CD14-positive monocyte (primary cell): ENCODE measurements at regions of chr10 and their contacts with region 1.

Region 1: GRCh38 chr10:62816331-62817120 is at the start of gene EGR2:
- DNase-seq: peak; percentile 91 to 94 (median 93)
- H3K4me3 ChIP-seq: peak within 1 kb of the TSS; percentile 58 to 82 (median 70)
- H3K4me3 Mint-ChIP-seq: peak within 1 kb of the TSS; percentile 98 to 99
- H3K27ac ChIP-seq: peak within 1 kb of the TSS; percentile 65 to 86
- H3K27ac Mint-ChIP-seq: peak within 1 kb of the TSS; percentile 88 to 96 (median 95)
- H3K4me1 ChIP-seq: peaks cover 31 to 41% of the 10 kb centered on the region in 2 donors
- H3K4me1 Mint-ChIP-seq: peaks cover 36% of the 10 kb centered on the region
- H3K27me3 ChIP-seq: peaks cover 44 to 67% of the 10 kb centered on the region in 2 donors
- H3K27me3 Mint-ChIP-seq: peaks cover 64 to 82% (median 67%) of the 10 kb centered on the region in 3 donors
- CTCF ChIP-seq: no peak
- polyA plus RNA-seq, gene EGR2: 9.9 to 54.9 (median 10.3) TPM

Region 2: GRCh38 chr10:62437696-62438095 is 378.8 kb before region 1 on chr10:
- intact Hi-C with region 1: loop called in 1 of 2 experiments (anchors 5 kb)
- DNase-seq: peak; percentile 40 to 68 (median 55)
- H3K4me3 ChIP-seq: no peak overlapping the region
- H3K4me3 Mint-ChIP-seq: no peak overlapping the region
- H3K27ac ChIP-seq: no peak overlapping the region
- H3K27ac Mint-ChIP-seq: no peak overlapping the region
- H3K4me1 ChIP-seq: peaks cover 0 to 10% of the 10 kb centered on the region in 2 donors
- H3K4me1 Mint-ChIP-seq: peaks cover 11% of the 10 kb centered on the region
- H3K27me3 ChIP-seq: peaks cover 0 to 8% of the 10 kb centered on the region in 2 donors
- H3K27me3 Mint-ChIP-seq: peaks cover 3 to 4% (median 3%) of the 10 kb centered on the region in 3 donors
- CTCF ChIP-seq: peak; percentile 85

Region 3: DNA sequence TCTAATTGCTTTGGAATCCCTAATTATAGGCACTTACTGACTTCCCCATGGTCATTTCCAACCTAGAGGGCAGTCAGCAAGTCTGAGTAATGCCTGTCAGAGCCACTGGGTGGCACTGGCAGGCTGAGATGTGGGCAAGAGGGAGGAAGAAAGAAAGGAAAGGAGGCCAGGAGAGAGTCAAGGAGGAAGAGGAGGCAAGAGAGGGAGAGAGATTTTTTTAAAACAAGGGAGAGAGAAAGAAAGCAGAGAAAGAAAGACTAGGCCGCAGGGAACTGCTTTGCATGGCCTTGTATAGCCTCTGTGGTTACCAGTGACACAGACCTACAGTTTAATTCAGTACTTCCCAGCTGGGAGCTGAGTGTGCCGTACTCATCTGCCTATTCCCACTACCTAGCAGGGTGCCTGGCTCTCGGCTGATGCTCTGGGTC is 222.4 kb before region 1 on chr10:
- intact Hi-C with region 1: loop called in 1 of 2 experiments (anchors 5 kb)
- DNase-seq: peak; percentile 59 to 72 (median 68)
- H3K4me3 ChIP-seq: no peak overlapping the region
- H3K4me3 Mint-ChIP-seq: no peak overlapping the region
- H3K27ac ChIP-seq: no peak overlapping the region
- H3K27ac Mint-ChIP-seq: peak overlapping the region in 5 of 7 donors; percentile 21 to 87 (median 69)
- H3K4me1 ChIP-seq: peaks cover 7 to 11% of the 10 kb centered on the region in 2 donors
- H3K4me1 Mint-ChIP-seq: peaks cover 14% of the 10 kb centered on the region
- H3K27me3 ChIP-seq: no peaks in the 10 kb centered on the region
- H3K27me3 Mint-ChIP-seq: peaks cover 0 to 2% (median 0%) of the 10 kb centered on the region in 3 donors
- CTCF ChIP-seq: peak; percentile 97

Region 4: GRCh38 chr10:62610649-62611229 is 205.8 kb before region 1 on chr10:
- intact Hi-C with region 1: loop called (anchors 5 kb)
- DNase-seq: peak; percentile 71 to 84 (median 79)
- H3K4me3 ChIP-seq: no peak overlapping the region
- H3K4me3 Mint-ChIP-seq: no peak overlapping the region
- H3K27ac ChIP-seq: no peak overlapping the region
- H3K27ac Mint-ChIP-seq: peak overlapping the region in 5 of 7 donors; percentile 14 to 68 (median 57)
- H3K4me1 ChIP-seq: peaks cover 24 to 25% of the 10 kb centered on the region in 2 donors
- H3K4me1 Mint-ChIP-seq: peaks cover 26% of the 10 kb centered on the region
- H3K27me3 ChIP-seq: no peaks in the 10 kb centered on the region
- H3K27me3 Mint-ChIP-seq: peaks cover 4 to 7% (median 6%) of the 10 kb centered on the region in 3 donors
- CTCF ChIP-seq: peak; percentile 96

Region 5: GRCh38 chr10:62885684-62886467 is 69.3 kb after region 1 on chr10:
- intact Hi-C with region 1: no loop called
- DNase-seq: no peak
- H3K4me3 ChIP-seq: no peak overlapping the region
- H3K4me3 Mint-ChIP-seq: peak overlapping the region in 1 of 2 donors; percentile 4
- H3K27ac ChIP-seq: no peak overlapping the region
- H3K27ac Mint-ChIP-seq: peak overlapping the region in 1 of 7 donors; percentile 5
- H3K4me1 ChIP-seq: no peaks in the 10 kb centered on the region
- H3K4me1 Mint-ChIP-seq: no peaks in the 10 kb centered on the region
- H3K27me3 ChIP-seq: peaks cover 0 to 16% of the 10 kb centered on the region in 2 donors
- H3K27me3 Mint-ChIP-seq: peaks cover 15 to 21% (median 19%) of the 10 kb centered on the region in 3 donors
- CTCF ChIP-seq: no peak

Region 6: GRCh38 chr10:62972103-62972502 is 155.6 kb after region 1 on chr10:
- intact Hi-C with region 1: no loop called
- DNase-seq: no peak
- H3K4me3 ChIP-seq: no peak overlapping the region
- H3K4me3 Mint-ChIP-seq: no peak overlapping the region
- H3K27ac ChIP-seq: no peak overlapping the region
- H3K27ac Mint-ChIP-seq: no peak overlapping the region
- H3K4me1 ChIP-seq: no peaks in the 10 kb centered on the region
- H3K4me1 Mint-ChIP-seq: no peaks in the 10 kb centered on the region
- H3K27me3 ChIP-seq: peaks cover 0 to 7% of the 10 kb centered on the region in 2 donors
- H3K27me3 Mint-ChIP-seq: peaks cover under 1 to 8% (median 8%) of the 10 kb centered on the region in 3 donors
- CTCF ChIP-seq: no peak

Region 7: DNA sequence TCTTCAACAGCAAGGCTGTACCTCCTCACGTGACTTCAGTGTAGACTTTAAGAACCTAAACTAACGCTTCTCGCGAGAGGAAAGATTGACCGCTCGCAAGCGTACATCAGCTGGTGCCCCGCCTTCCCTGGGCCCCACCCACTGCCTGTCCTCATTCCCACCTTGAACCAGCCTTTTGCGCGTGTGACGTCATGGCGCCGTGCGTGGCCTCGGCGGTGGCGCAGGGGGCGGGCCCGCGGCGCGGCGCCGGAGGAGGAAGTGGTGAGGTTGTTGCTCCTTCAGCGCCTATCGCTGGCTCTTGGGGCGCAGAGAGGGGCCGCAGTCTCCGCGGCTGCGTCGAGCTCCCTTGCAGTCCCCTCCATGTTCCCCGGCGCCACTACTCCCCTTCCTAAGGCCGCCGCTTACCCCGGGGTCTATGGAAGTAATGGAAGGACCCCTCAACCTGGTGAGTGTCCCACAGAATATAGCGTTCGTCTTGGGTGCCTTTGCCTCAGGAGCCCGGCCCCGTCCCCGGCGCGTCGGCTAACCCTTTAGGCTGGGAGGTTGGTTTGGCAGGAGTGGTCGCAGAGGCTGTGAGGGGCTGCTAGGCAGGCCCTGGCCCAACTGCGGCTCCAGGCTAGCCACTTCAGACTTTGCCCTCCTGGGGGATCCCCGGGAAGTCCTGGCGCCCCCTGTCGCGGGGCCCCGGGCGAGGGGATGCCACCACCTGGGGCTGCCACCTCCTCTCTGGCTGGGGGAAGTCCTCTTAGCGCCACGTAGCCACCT is 316.7 kb after region 1 on chr10 and contains the start of gene NRBF2:
- intact Hi-C with region 1: loop called in 1 of 2 experiments (anchors 10 kb)
- DNase-seq: peak; percentile 97 to 99 (median 98)
- H3K4me3 ChIP-seq: peak within 1 kb of the TSS; percentile 72 to 88 (median 80)
- H3K4me3 Mint-ChIP-seq: peak within 1 kb of the TSS; percentile 86 to 92
- H3K27ac ChIP-seq: peak within 1 kb of the TSS; percentile 95 to 97
- H3K27ac Mint-ChIP-seq: peak within 1 kb of the TSS; percentile 96 to 99 (median 97)
- H3K4me1 ChIP-seq: peaks cover 28 to 43% of the 10 kb centered on the region in 2 donors
- H3K4me1 Mint-ChIP-seq: peaks cover 43% of the 10 kb centered on the region
- H3K27me3 ChIP-seq: no peaks in the 10 kb centered on the region
- H3K27me3 Mint-ChIP-seq: peaks cover 2 to 13% (median 4%) of the 10 kb centered on the region in 3 donors
- CTCF ChIP-seq: no peak
- polyA plus RNA-seq, gene NRBF2: 13.6 to 38.1 (median 17.9) TPM

Region 8: GRCh38 chr10:63157845-63158624 is 341.5 kb after region 1 on chr10:
- intact Hi-C with region 1: loop called in 1 of 2 experiments (anchors 10 kb)
- DNase-seq: peak; percentile 65 to 81 (median 70)
- H3K4me3 ChIP-seq: no peak overlapping the region
- H3K4me3 Mint-ChIP-seq: no peak overlapping the region
- H3K27ac ChIP-seq: no peak overlapping the region
- H3K27ac Mint-ChIP-seq: peak overlapping the region in 1 of 7 donors; percentile 20
- H3K4me1 ChIP-seq: peaks cover 18 to 24% of the 10 kb centered on the region in 2 donors
- H3K4me1 Mint-ChIP-seq: peaks cover 20% of the 10 kb centered on the region
- H3K27me3 ChIP-seq: no peaks in the 10 kb centered on the region
- H3K27me3 Mint-ChIP-seq: peaks cover 0 to 2% (median 0%) of the 10 kb centered on the region in 3 donors
- CTCF ChIP-seq: peak; percentile 91